Head of caudate nucleus (tissue), 42 donors: ENCODE measurements at regions of chr16 and their contacts with region 1.

Region 1: DNA sequence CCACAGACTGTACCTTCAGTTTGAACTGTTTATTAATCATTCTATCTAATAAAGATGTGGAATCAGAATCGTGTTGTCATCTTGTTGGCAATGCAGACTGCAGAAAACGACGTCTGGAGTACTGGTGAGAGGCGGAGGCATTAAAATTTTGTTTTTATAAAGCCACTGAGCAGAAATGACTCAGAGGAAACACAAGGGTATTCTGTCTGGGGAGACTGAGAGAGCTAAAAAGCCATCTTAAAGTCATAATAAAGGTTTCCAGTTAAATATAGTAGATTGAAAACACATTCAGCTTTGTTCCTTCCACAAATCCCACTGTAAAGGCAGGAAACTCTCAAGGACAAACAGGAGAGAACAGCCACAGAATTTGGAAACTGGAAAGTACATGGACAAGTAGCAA is 74.2 kb downstream of the CPPED1 start:
- DNase-seq: no peak

Region 2: GRCh38 chr16:12803203-12804097 is 74.0 kb after region 1 on chr16 and contains the start of gene CPPED1:
- intact Hi-C with region 1: loop called (anchors 10 kb)
- DNase-seq: peak; percentile 84 to 98 (median 94)

Region 3: GRCh38 chr16:13262270-13263090 is 533.0 kb after region 1 on chr16:
- intact Hi-C with region 1: no loop called
- DNase-seq: no peak